Astrocyte of the cerebellum (primary cell): ENCODE measurements at regions of chr19 and their contacts with region 1.

Region 1: DNA sequence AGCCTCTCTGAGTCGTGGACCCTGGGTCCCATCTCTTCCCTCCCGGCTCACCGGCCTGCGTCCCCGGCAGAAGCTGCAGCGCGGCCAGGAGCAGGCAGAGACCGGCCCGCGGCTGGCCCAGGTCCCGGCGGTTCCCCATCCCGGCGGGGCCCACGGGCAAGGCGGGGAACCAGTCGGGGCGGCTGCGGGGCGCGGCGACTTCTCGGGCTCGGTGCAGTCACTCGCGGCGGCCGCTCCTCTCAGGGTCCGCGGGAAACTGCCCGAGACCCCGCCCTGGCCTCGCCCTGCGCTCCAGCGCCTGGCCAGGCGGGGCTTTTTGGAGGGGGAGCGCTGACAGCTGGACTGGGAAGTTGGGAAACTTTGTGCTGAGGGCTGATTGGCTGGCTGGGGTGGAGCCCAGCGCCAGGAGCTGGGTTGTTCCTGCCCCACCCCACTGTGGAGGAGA is at the start of gene COL5A3:
- DNase-seq: no peak
- H3K4me3 ChIP-seq: peak within 1 kb of the TSS; percentile 16
- CTCF ChIP-seq: no peak

Region 2: DNA sequence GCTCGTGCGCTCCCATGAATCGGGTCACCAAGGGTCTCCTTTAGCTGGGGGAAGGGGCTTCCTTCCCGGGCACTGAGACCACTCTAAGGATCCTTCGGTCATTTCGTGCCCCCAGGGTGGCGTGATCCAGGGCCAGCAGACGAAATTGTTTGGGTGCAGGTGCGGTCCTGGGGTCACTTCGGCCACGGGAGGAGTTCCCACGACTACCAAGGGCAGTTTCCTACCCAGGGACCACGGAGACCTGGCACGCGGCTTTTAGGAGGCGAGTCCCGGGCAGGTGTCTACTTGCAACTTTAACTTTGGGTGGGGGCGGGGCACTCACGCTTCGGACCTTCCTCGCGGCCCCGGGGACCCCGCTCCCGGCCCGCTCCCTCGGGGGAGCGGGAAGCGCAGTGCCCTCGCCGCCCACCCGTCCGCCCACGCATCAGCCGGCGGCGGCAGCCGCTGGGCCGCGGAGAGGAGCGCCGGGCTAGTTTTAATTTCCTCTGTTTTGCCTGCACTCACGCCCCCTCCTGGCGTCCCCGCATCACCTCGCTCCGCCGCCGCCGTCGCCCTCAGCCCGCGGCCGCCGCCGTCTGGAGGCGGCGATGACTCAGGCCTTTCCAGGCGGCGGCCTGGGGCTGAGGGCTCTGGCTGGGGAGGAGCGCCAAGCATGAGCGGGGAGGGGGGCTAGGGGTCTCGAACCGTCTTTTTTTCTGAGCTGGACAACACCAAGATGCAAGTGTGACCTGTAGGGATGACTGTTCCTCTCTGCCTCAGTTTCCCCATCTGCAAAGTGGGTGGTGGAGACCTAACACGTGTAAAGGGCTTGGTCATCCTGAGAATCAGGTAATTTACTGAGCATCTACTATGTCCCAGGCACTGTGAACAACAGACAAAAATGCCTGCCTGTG is 95.7 kb before region 1 on chr19:
- in situ Hi-C with region 1: no loop called
- DNase-seq: no peak
- H3K4me3 ChIP-seq: peak overlapping the region; percentile 36
- CTCF ChIP-seq: peak; percentile 43

Region 3: GRCh38 chr19:9934132-9934950 is 75.9 kb before region 1 on chr19:
- in situ Hi-C with region 1: loop called (anchors 5 kb)
- DNase-seq: no peak
- H3K4me3 ChIP-seq: no peak overlapping the region
- CTCF ChIP-seq: peak; percentile 75

Region 4: DNA sequence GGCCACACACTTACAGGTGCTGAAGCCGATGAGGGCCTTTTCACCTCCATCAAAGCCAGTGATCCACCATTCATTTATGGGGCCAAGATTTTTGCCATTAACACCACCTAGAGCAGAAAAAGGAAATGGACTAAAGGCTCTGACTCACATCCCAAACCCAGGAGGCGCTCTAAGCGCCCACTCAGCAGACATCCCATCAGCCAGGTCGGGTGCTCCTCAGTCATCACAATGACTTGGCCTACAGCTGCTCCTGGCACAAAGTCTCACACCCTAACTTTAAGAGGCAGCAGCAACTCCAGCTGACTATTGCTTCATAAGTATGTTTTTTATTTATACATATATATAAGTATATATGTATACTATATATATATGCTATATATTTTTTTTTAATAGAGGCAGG is 145.6 kb after region 1 on chr19:
- in situ Hi-C with region 1: no loop called
- DNase-seq: no peak
- H3K4me3 ChIP-seq: no peak overlapping the region
- CTCF ChIP-seq: no peak

Region 5: DNA sequence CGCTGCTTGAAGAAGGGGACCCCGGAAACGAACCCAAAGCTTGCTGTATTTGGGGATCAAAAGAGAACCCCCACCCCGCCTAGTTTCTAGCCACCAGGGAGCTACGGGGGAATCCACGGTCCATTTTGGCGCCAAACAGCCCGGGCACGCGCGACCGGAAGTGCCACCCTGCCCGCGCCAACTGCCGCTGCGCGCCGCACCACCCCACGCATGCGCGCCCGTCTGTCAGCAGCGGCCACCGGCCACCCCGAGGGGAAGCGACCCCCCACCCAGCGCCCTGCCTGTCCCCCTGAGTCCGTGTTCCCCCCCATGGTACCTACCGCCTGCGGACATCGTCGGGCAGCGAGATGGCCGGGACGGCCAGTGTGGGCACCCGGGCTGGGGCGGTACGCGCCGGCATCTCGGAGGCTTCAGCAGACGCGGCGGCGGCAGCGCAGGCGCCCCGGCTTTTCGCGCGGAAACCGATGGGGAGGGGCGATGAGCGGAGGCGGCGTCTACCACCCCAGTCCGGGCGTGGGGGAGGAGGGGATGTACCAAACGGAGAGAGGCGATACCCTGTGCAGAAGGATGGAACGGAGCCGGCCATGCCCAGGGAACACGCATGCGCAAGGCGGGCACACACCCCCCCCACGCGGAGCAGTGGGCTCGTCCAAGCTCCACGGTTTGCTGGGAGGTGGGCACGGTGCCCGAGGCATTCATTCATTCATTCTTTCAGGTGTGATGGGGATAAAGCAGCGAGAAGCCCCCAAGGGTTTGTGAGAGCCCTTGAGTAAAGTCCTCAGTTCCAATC is 184.4 kb after region 1 on chr19 and contains the start of gene DNMT1:
- in situ Hi-C with region 1: no loop called
- DNase-seq: peak; percentile 87
- H3K4me3 ChIP-seq: peak within 1 kb of the TSS; percentile 82
- CTCF ChIP-seq: no peak